Endothelial cell of umbilical vein (primary cell): ENCODE measurements at regions of chr9 and their contacts with region 1.

Region 1: DNA sequence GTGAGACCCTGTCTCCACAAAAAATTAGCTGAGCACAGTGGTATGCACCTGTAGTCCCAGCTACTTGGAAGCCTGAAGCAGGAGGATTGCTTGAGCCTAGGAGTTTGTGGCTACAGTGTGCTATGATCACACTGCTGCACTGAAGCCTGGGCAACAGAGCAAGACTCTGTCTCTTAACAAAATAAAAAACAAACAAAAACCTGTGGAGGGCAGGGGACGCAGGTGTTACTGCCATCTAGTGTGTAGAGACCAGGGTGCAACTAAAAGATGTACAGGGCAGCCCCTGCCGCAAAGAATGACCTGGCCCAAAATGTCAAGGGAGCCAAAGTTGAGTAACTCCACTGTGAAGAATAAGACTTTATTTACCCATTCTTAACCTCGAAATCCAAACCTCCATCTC is 27.1 kb downstream of the ASPN start:
- DNase-seq: no peak
- H3K4me3 ChIP-seq: no peak overlapping the region
- H3K27ac ChIP-seq: no peak overlapping the region
- H3K4me1 ChIP-seq: no peaks in the 10 kb centered on the region
- H3K27me3 ChIP-seq: no peaks in the 10 kb centered on the region
- CTCF ChIP-seq: peak in 1 of 2 donors; percentile 15
- POLR2A ChIP-seq: no peak

Region 2: GRCh38 chr9:91790917-91791316 is 664.3 kb before region 1 on chr9:
- CTCF ChIA-PET with region 1: no interaction called
- POLR2A ChIA-PET with region 1: interaction called, 10 read pairs
- dilution Hi-C with region 1: no loop called
- intact Hi-C with region 1: no loop called
- DNase-seq: no peak
- H3K4me3 ChIP-seq: no peak overlapping the region
- H3K27ac ChIP-seq: no peak overlapping the region
- H3K4me1 ChIP-seq: no peaks in the 10 kb centered on the region
- H3K27me3 ChIP-seq: no peaks in the 10 kb centered on the region
- CTCF ChIP-seq: no peak
- POLR2A ChIP-seq: no peak